Esophagus squamous epithelium (tissue), 5 donors: ENCODE measurements at regions of chr11 and their contacts with region 1.

Region 1: DNA sequence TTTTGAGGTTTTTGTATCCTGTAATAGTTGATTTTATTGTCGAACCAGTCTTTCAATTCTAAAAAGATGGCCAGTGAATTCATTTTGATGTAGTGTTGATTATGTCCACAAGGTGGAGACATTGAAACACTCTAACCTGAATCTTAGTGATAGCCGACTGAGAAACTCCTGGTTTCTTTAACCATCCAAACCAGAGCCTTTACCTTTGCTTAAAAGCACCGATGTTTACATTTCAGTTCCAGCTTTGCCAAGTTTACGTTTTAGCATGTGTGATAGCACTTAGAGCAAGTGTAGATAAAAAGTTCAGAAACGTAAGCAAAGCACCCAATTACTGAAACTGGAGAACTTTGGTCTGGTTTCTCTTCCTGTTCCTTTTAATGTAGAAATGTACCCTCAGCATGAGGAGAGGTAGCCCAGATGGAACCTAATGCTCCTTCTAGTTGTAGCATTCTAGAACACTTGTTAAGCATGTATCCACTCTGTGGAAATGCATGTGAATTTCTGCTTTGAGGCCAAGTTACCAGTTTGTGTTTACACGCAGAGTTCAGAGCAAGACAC is 208.6 kb downstream of the DBX1 start:
- DNase-seq: no peak
- H3K4me3 ChIP-seq: peak overlapping the region in 1 of 4 donors; percentile 27
- H3K27ac ChIP-seq: peak overlapping the region in 1 of 4 donors; percentile 3
- H3K4me1 ChIP-seq: peaks cover 0 to 37% (median 3%) of the 10 kb centered on the region in 3 donors
- H3K27me3 ChIP-seq: no peaks in the 10 kb centered on the region
- CTCF ChIP-seq: peak in 5 of 6 experiments; percentile 69 to 90 (median 69)
- POLR2A ChIP-seq: no peak

Region 2: DNA sequence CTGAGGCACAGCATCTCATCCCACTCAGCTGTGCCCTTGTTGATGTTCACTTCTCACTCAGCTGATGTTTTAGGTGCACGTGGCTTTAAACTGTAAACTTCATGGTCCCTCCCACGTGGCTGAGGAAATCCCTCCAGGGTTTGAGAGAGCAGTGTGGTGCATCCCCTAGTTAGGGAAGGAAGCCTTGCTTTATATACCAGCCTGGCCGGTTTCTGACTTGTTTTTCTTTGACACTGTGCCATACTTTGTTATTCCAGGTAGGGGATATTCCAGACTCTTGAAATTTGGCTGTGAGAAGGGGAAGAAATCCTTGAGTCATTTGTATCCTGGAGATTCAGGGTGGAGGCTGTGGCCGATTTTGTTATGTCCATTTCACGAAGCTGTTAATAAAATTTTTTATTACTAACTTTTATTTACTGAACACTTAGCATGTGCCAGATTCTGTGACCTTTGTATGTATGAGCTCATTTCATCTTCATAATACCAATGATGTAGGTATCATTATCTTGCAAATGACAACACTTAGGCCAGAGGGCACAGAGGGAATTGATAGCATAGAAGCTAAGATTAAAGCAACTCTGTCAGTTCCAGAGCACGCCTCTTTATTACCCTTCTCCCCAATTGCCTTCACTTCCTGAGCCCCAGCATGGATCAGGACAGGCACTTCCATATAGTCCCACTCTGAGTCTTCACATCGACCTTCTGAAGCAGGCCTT is 122.4 kb before region 1 on chr11:
- intact Hi-C with region 1: no loop called
- DNase-seq: no peak
- H3K4me3 ChIP-seq: no peak overlapping the region
- H3K27ac ChIP-seq: no peak overlapping the region
- H3K4me1 ChIP-seq: peaks cover 8 to 35% (median 20%) of the 10 kb centered on the region in 3 donors
- H3K27me3 ChIP-seq: no peaks in the 10 kb centered on the region
- CTCF ChIP-seq: no peak
- POLR2A ChIP-seq: no peak

Region 3: DNA sequence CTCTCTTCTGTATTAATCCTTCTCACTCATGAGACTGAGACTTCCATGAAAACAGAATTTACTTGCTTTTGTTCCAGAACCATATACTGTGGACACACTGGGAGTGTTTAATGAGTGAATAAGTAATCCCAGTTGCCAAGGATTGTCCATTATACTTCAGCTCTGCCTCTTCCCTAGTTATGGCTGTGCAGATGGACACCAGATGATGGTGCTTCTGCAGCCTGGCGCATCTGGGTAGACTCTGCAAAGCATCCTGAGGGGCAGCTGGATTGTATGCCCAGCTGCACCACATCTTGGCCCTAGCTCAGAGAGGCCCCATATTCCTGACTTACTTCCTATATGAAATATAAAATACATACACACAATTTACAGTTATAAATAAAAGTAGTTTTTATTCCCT is 165.2 kb after region 1 on chr11:
- intact Hi-C with region 1: loop called (anchors 5 kb)
- DNase-seq: no peak
- H3K4me3 ChIP-seq: no peak overlapping the region
- H3K27ac ChIP-seq: no peak overlapping the region
- H3K4me1 ChIP-seq: peaks cover 12 to 18% (median 15%) of the 10 kb centered on the region in 3 donors
- H3K27me3 ChIP-seq: no peaks in the 10 kb centered on the region
- CTCF ChIP-seq: no peak
- POLR2A ChIP-seq: no peak

Region 4: GRCh38 chr11:20355221-20356219 is 403.9 kb after region 1 on chr11:
- intact Hi-C with region 1: loop called (anchors 10 kb)
- DNase-seq: no peak
- H3K4me3 ChIP-seq: no peak overlapping the region
- H3K27ac ChIP-seq: no peak overlapping the region
- H3K4me1 ChIP-seq: peaks cover 0 to 10% (median 0%) of the 10 kb centered on the region in 3 donors
- H3K27me3 ChIP-seq: peaks cover 0 to 4% (median 0%) of the 10 kb centered on the region in 4 donors
- CTCF ChIP-seq: peak in 5 of 6 experiments; percentile 40 to 62 (median 48)
- POLR2A ChIP-seq: no peak